Caco-2 (cell line): ENCODE measurements at regions of chr21 and their contacts with region 1.

Region 1: DNA sequence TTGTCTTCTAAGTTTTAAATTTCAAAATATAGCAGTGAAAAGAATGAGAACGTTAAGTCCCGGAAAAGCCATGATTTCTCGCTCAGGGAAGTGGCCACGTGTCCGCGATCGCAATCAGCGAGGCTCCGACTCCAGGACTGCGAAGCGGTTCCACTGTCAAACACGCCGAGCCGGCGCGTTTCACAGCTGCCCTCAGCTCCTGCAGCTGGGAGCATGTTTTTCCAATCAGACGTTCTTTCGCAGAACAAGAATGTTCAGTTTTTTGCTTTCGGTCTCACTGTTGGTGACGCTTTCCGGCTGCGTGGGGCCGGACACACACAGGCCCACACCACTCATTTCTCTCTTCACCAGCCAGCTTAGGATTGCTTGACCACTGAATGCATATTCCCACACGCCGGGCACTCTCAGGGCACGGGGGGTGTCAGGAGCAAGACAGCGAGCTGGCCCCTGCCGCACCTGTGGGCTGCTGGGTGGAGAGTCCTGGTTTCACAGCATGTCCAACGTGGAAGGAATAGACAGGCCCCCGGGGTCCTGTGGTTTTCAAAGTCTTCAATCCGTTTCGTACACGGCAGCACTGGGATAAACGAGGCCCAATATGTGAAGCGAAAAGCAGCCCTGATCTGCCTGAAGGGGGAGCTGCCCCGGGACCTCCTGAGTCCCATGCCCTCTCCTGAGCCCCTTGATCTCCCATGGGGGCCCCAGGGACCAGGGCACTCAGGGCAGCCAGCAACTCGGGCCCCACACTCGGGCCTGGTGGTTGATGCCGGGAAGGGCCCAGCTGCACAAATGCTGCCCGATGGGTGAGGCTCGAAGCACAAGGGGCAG is 47.3 kb upstream of the COL18A1 start:
- DNase-seq: peak; percentile 58 to 65
- H3K4me3 ChIP-seq: no peak overlapping the region
- H3K4me3 Mint-ChIP-seq: peak overlapping the region; percentile 62
- H3K27ac Mint-ChIP-seq: peak overlapping the region; percentile 99
- H3K4me1 ChIP-seq: peaks cover 79% of the 10 kb centered on the region
- H3K4me1 Mint-ChIP-seq: peaks cover 75% of the 10 kb centered on the region
- H3K27me3 ChIP-seq: no peaks in the 10 kb centered on the region
- H3K27me3 Mint-ChIP-seq: no peaks in the 10 kb centered on the region
- CTCF ChIP-seq: peak in 1 of 2 experiments; percentile 14

Region 2: GRCh38 chr21:45287438-45288391 is 69.9 kb before region 1 on chr21 and contains the start of gene POFUT2:
- CTCF ChIA-PET with region 1: interaction called, 3 read pairs
- POLR2A ChIA-PET with region 1: interaction called, 10 read pairs
- intact Hi-C with region 1: loop called (anchors 1 kb)
- DNase-seq: peak; percentile 96 to 98
- H3K4me3 ChIP-seq: peak within 1 kb of the TSS; percentile 91
- H3K4me3 Mint-ChIP-seq: peak within 1 kb of the TSS; percentile 72
- H3K27ac Mint-ChIP-seq: peak within 1 kb of the TSS; percentile 66
- H3K4me1 ChIP-seq: peaks cover 9% of the 10 kb centered on the region
- H3K4me1 Mint-ChIP-seq: peaks cover 6% of the 10 kb centered on the region
- H3K27me3 ChIP-seq: no peaks in the 10 kb centered on the region
- H3K27me3 Mint-ChIP-seq: no peaks in the 10 kb centered on the region
- CTCF ChIP-seq: no peak
- total RNA-seq, gene POFUT2: 32.0 and 36.5 TPM in 2 replicates

Region 3: GRCh38 chr21:45330075-45330781 is 27.4 kb before region 1 on chr21:
- CTCF ChIA-PET with region 1: interaction called, 13 read pairs
- POLR2A ChIA-PET with region 1: interaction called, 8 read pairs
- intact Hi-C with region 1: loop called (anchors 1 kb)
- DNase-seq: peak; percentile 86 to 91
- H3K4me3 ChIP-seq: peak overlapping the region; percentile 42
- H3K4me3 Mint-ChIP-seq: peak overlapping the region; percentile 76
- H3K27ac Mint-ChIP-seq: peak overlapping the region; percentile 92
- H3K4me1 ChIP-seq: peaks cover 64% of the 10 kb centered on the region
- H3K4me1 Mint-ChIP-seq: peaks cover 41% of the 10 kb centered on the region
- H3K27me3 ChIP-seq: no peaks in the 10 kb centered on the region
- H3K27me3 Mint-ChIP-seq: no peaks in the 10 kb centered on the region
- CTCF ChIP-seq: no peak

Region 4: GRCh38 chr21:45371081-45371480 is 13.4 kb after region 1 on chr21:
- CTCF ChIA-PET with region 1: no interaction called
- POLR2A ChIA-PET with region 1: no interaction called
- intact Hi-C with region 1: no loop called
- DNase-seq: no peak
- H3K4me3 ChIP-seq: no peak overlapping the region
- H3K4me3 Mint-ChIP-seq: no peak overlapping the region
- H3K27ac Mint-ChIP-seq: peak overlapping the region; percentile 3
- H3K4me1 ChIP-seq: peaks cover 19% of the 10 kb centered on the region
- H3K4me1 Mint-ChIP-seq: peaks cover 32% of the 10 kb centered on the region
- H3K27me3 ChIP-seq: no peaks in the 10 kb centered on the region
- H3K27me3 Mint-ChIP-seq: no peaks in the 10 kb centered on the region
- CTCF ChIP-seq: no peak

Region 5: GRCh38 chr21:45386721-45387371 is 29.2 kb after region 1 on chr21:
- CTCF ChIA-PET with region 1: interaction called, 8 read pairs
- POLR2A ChIA-PET with region 1: interaction called, 4 read pairs
- intact Hi-C with region 1: loop called (anchors 2 kb)
- DNase-seq: peak in 1 of 2 experiments; percentile 30
- H3K4me3 ChIP-seq: no peak overlapping the region
- H3K4me3 Mint-ChIP-seq: no peak overlapping the region
- H3K27ac Mint-ChIP-seq: peak overlapping the region; percentile 66
- H3K4me1 ChIP-seq: peaks cover 24% of the 10 kb centered on the region
- H3K4me1 Mint-ChIP-seq: no peaks in the 10 kb centered on the region
- H3K27me3 ChIP-seq: no peaks in the 10 kb centered on the region
- H3K27me3 Mint-ChIP-seq: no peaks in the 10 kb centered on the region
- CTCF ChIP-seq: no peak

Region 6: DNA sequence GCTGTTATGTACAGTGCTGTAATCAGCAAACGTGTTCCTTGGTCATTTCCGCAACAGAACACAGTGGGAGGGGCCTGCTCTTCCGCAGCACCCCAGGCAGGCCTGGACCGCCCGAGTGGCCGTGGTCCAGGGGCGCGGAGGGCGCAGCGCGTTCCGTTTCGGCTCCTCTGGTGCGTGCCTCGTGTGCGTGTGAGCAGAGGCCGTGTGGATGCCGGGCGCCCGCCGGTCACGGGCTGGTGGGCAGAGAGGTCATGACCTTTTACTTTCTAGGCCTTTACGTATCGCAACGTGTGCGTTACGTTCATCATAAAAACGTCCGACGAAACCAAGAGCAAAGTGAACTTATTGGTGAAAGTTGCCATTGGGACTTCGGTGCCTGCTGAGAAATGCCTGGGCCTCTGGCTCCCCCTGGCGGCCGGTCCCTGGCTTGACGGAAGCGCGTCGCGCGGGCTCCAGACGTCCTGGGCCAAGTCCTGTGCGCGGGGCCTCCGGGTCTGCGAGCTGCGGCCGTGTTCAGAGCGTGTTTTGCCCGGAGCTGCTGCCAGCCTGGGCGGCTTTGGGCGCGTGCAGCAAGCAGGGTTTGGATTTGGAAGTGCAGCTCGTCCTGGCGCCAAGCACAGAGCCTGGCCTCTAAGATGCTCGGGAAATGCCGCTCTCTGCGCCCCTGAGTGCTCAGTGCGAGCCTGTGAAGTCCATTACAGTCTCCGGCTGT is 81.7 kb after region 1 on chr21:
- CTCF ChIA-PET with region 1: interaction called, 4 read pairs
- POLR2A ChIA-PET with region 1: no interaction called
- intact Hi-C with region 1: loop called (anchors 1 kb)
- DNase-seq: peak; percentile 67 to 82
- H3K4me3 ChIP-seq: no peak overlapping the region
- H3K4me3 Mint-ChIP-seq: no peak overlapping the region
- H3K27ac Mint-ChIP-seq: peak overlapping the region; percentile 29
- H3K4me1 ChIP-seq: peaks cover 6% of the 10 kb centered on the region
- H3K4me1 Mint-ChIP-seq: peaks cover 13% of the 10 kb centered on the region
- H3K27me3 ChIP-seq: no peaks in the 10 kb centered on the region
- H3K27me3 Mint-ChIP-seq: no peaks in the 10 kb centered on the region
- CTCF ChIP-seq: peak; percentile 86 to 91